CD8-positive, alpha-beta memory T cell (primary cell): ENCODE measurements at regions of chr19 and their contacts with region 1.

Region 1: GRCh38 chr19:48255376-48256303 is at the start of gene CARD8:
- DNase-seq: peak; percentile 69 to 90 (median 76)
- H3K4me3 ChIP-seq: peak within 1 kb of the TSS; percentile 95
- H3K4me3 Mint-ChIP-seq: peak within 1 kb of the TSS; percentile 98 to 100 (median 100)
- H3K27ac ChIP-seq: peak within 1 kb of the TSS; percentile 91
- H3K27ac Mint-ChIP-seq: peak within 1 kb of the TSS; percentile 91 to 100 (median 98)
- H3K4me1 ChIP-seq: peaks cover 72% of the 10 kb centered on the region
- H3K4me1 Mint-ChIP-seq: peaks cover 69 to 86% (median 85%) of the 10 kb centered on the region in 3 donors
- H3K27me3 ChIP-seq: no peaks in the 10 kb centered on the region
- H3K27me3 Mint-ChIP-seq: no peaks in the 10 kb centered on the region
- total RNA-seq, gene CARD8: 132 TPM

Region 2: DNA sequence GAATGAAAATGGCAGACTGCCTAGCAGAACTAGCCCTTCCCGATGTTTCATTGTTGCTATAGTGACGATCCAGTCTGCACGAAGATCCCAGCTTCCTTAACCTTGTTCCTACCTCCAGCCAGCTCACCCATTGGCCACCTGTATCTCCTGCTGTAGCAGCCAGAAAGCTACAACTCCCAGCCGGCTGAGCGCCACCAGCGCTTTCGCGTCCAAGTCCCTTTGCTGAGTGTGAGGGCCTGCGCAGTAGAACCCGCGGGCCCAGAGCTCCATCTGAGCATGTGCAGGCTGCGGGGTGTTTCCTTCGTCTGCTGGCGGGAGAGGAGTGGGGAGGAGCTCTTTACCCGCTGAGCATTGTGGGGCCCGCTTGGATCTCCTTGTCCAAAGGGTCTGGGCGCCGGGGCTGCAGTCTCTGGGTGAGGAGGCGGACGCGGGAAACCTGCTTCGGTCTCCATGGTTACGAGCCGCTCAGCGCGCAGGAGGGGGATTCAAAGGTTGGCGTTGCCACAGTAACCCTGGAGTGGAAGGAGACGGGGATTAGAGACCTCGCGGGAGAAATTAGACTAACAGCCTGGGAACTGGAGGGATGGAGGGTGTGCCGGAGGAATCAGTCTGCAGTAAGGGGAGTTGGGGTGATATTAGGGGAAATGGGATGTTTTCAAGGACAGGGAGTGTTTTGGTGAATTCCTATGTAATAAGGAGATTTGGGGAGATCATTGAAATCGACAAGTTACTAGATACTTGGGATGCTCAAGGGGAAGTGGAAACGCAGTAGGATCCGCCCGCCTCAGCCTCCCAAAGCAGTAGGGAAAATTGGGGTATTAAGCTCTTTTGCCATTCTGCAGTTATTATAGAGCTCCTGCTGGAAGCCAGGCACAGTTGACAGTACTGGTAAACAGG is 51.7 kb before region 1 on chr19:
- CTCF ChIA-PET with region 1: interaction called, 18 read pairs
- POLR2A ChIA-PET with region 1: interaction called, 8 read pairs
- DNase-seq: peak; percentile 83 to 92 (median 85)
- H3K4me3 ChIP-seq: peak overlapping the region; percentile 98
- H3K4me3 Mint-ChIP-seq: no peak overlapping the region
- H3K27ac ChIP-seq: peak overlapping the region; percentile 78
- H3K27ac Mint-ChIP-seq: no peak overlapping the region
- H3K4me1 ChIP-seq: peaks cover 22% of the 10 kb centered on the region
- H3K4me1 Mint-ChIP-seq: peaks cover 19 to 29% (median 26%) of the 10 kb centered on the region in 3 donors
- H3K27me3 ChIP-seq: no peaks in the 10 kb centered on the region
- H3K27me3 Mint-ChIP-seq: peaks cover 0 to 2% of the 10 kb centered on the region in 2 donors

Region 3: GRCh38 chr19:48244281-48244680 is 11.4 kb before region 1 on chr19:
- CTCF ChIA-PET with region 1: interaction called, 10 read pairs
- POLR2A ChIA-PET with region 1: interaction called, 13 read pairs
- DNase-seq: peak in 4 of 5 donors; percentile 8 to 50 (median 44)
- H3K4me3 ChIP-seq: peak overlapping the region; percentile 24
- H3K4me3 Mint-ChIP-seq: peak overlapping the region; percentile 62 to 84 (median 76)
- H3K27ac ChIP-seq: no peak overlapping the region
- H3K27ac Mint-ChIP-seq: peak overlapping the region; percentile 55 to 99 (median 92)
- H3K4me1 ChIP-seq: peaks cover 48% of the 10 kb centered on the region
- H3K4me1 Mint-ChIP-seq: peaks cover 50 to 64% (median 64%) of the 10 kb centered on the region in 3 donors
- H3K27me3 ChIP-seq: no peaks in the 10 kb centered on the region
- H3K27me3 Mint-ChIP-seq: no peaks in the 10 kb centered on the region